ENCODE measurements at regions of chr9 and their contacts with region 1.

Region 1: DNA sequence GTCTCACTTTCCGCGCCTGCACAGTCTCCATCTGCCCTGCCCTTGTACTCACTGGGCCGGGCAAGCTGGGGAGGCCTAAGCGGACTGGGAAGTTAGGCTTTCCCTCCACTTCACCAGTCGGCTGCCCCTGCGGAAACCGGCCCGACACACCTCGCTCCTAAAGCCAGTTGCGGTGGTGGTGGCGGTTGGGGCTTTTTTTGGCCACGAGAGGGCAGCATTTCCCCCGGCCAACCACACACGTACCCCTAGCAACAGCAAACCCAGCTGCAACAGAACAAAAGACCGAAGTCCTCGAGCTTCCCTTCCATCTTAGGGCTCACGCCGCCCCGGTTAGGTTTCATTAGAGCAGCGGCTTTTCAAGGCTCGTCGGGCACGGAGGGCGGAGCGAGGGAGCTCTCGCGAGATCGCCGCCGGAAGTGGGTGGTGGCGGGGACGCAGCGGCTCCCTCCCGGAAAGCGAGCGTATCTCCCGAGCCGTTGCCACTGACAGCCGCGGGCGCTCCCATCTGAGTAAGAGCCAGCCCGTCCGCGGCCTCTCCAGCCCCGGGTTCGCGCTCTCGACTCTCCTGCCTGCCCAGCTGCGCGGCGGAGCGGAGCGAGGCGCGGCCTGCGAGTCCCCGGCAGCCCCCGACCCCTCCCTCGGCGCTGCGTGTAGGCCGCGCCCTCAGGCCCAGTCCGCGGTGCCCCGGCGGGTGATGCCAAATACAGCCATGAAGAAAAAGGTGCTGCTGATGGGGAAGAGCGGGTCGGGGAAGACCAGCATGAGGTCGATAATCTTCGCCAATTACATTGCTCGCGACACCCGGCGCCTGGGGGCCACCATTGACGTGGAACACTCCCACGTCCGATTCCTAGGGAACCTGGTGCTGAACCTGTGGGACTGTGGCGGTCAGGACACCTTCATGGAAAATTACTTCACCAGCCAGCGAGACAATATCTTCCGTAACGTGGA is at the start of gene RRAGA:
- DNase-seq: peak; percentile 92
- H3K4me3 Mint-ChIP-seq: peak within 1 kb of the TSS; percentile 96
- H3K27ac Mint-ChIP-seq: peak within 1 kb of the TSS; percentile 99
- H3K4me1 Mint-ChIP-seq: peaks cover 43% of the 10 kb centered on the region
- H3K27me3 Mint-ChIP-seq: peaks cover under 1% of the 10 kb centered on the region
- total RNA-seq, gene RRAGA: 56.8 and 56.9 TPM in 2 replicates

Region 2: DNA sequence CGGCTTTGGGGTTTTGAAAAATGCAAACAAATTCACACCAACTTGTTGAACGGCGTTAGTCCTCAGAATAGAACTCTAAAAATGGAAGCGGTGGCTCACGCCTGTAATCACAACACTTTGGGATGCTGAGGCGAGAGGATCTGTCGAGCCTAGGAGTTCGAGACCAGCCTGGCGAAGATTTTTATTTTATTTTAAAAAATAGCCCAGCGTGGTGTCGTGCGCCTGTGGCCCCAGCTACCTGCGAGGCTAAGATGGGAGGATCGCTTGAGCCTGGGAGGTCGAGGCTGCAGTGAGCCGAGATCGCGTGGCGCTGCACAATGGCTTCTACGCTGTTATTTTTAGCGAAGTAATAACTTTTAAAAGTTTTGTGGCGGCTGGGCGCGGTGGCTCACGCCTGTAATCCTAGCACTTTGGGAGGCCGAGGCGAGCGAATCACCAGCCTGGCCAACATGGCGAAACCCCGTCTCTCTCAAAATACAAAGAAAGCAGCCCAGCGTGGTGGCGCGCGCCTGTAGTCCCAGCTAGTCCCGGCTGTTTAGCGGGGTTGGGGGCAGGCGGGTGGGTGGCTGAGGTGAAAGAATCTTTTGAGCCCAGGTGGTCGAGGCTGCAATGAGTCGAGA is 78.8 kb after region 1 on chr9:
- intact Hi-C with region 1: loop called (anchors 1 kb)
- DNase-seq: peak; percentile 18
- H3K4me3 Mint-ChIP-seq: peak overlapping the region; percentile 92
- H3K27ac Mint-ChIP-seq: peak overlapping the region; percentile 89
- H3K4me1 Mint-ChIP-seq: peaks cover 53% of the 10 kb centered on the region
- H3K27me3 Mint-ChIP-seq: no peaks in the 10 kb centered on the region

Region 3: GRCh38 chr9:19174127-19174912 is 125.1 kb after region 1 on chr9:
- intact Hi-C with region 1: loop called (anchors 1 kb)
- DNase-seq: peak; percentile 32
- H3K4me3 Mint-ChIP-seq: no peak overlapping the region
- H3K27ac Mint-ChIP-seq: peak overlapping the region; percentile 15
- H3K4me1 Mint-ChIP-seq: peaks cover 22% of the 10 kb centered on the region
- H3K27me3 Mint-ChIP-seq: peaks cover 2% of the 10 kb centered on the region

Region 4: DNA sequence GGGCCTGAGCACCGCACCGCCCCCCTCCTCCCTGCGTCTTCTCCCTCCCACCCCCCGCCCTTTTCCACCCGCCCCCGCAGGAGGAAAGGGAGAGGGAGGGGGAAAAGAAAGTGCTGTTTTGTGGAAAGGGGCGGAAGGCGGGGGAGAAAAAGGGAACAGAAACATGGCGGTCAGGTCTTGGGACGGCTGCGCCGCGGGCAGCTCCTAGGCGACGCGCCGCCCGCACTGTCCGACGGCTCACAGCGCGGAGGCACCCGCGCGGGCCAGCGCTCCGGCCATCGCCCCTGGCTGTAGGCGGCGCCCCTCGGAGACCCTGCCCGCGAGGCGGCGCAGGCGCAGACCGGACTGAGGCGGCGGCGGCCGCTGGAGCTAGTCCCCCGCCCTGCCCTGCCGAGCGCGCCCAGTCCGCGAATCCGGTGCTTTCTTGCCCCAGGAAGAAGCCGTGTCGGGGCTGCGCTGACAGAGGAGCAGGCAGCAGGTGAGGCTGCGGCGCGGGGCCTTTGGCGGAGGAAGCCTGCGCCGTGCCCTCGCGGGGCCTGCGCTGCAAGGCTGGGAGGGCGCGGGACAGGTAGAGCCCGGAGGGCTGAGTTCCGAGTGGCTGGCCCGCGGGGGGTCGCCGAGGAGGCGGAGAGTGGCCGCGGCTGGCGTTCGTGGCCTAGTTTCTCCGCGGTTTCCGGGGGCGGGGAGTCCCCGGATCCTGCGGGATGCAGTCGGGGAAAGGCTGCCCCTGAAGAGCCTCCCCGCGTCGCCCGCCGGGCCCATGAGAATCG is 181.3 kb after region 1 on chr9 and contains the start of gene DENND4C:
- intact Hi-C with region 1: loop called (anchors 1 kb)
- DNase-seq: peak; percentile 83
- H3K4me3 Mint-ChIP-seq: peak within 1 kb of the TSS; percentile 77
- H3K27ac Mint-ChIP-seq: peak within 1 kb of the TSS; percentile 73
- H3K4me1 Mint-ChIP-seq: peaks cover 8% of the 10 kb centered on the region
- H3K27me3 Mint-ChIP-seq: no peaks in the 10 kb centered on the region
- total RNA-seq, gene DENND4C: 18.4 and 21.1 TPM in 2 replicates

Region 5: DNA sequence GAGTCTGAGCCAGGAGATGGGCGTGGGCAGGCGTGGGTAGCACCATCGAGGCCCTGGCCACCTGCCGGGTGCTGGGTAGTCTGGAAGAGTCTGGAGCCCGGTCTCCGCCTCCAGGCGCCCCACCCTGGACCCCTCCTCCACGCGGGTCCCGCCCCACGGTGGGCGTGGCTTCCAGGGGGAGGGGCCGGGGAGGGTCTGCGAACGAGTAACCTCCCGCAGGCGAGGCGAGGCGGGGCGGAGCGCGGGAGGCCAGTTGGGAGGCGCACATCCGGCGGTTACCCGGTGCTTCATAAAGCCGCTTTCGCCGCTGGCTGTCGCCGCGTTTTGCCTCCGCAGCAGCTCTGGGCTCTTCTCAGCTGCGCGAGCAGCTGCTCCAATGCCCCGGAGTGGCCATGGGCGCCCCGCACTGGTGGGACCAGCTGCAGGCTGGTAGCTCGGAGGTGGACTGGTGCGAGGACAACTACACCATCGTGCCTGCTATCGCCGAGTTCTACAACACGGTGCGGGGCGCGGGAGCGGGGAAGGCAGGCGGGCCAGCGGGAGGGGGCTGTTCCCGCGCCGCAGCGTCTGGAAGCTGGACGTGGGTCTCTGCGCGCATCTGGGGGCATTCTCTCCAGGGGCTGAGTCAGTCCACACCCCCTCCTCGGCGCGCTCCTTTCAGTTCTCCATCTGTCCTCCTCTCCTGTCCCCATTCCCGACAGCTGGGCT is 359.6 kb after region 1 on chr9 and contains the start of gene ACER2:
- intact Hi-C with region 1: loop called (anchors 1 kb)
- DNase-seq: peak; percentile 95
- H3K4me3 Mint-ChIP-seq: peak within 1 kb of the TSS; percentile 97
- H3K27ac Mint-ChIP-seq: peak within 1 kb of the TSS; percentile 27
- H3K4me1 Mint-ChIP-seq: peaks cover 18% of the 10 kb centered on the region
- H3K27me3 Mint-ChIP-seq: peaks cover 10% of the 10 kb centered on the region
- total RNA-seq, gene ACER2: 1.3 and 1.4 TPM in 2 replicates

Measured in activated T-helper 1 cell treated with anti-CD3 and anti-CD28 coated beads, Interleukin-12 subunit alpha, Interleukin-12 subunit beta, Interleukin-2, Interleukin-4 antibody, amounts not matched to agents 30 ng/mL and 10 ng/mL and 1 ng/mL, durations not matched to agents 14 hours and 24 hours and 36 hours (primary cell).